Activated T-helper 2 cell treated with anti-CD3 and anti-CD28 coated beads, Interferon-gamma antibody, Interleukin-2, Interleukin-4, amounts not matched to agents 10 μg/mL and 5 μg/mL and 100 μg/mL, durations not matched to agents 14 hours and 24 hours and 36 hours (primary cell): ENCODE measurements at regions of chr1 and their contacts with region 1.

Region 1: GRCh38 chr1:222589462-222590302 is at the start of gene TAF1A:
- DNase-seq: peak; percentile 79
- H3K4me3 Mint-ChIP-seq: peak within 1 kb of the TSS; percentile 96
- H3K27ac Mint-ChIP-seq: peak within 1 kb of the TSS; percentile 93
- H3K4me1 Mint-ChIP-seq: peaks cover 27% of the 10 kb centered on the region
- H3K27me3 Mint-ChIP-seq: no peaks in the 10 kb centered on the region
- total RNA-seq, gene TAF1A: 17.6 and 17.9 TPM in 2 replicates

Region 2: DNA sequence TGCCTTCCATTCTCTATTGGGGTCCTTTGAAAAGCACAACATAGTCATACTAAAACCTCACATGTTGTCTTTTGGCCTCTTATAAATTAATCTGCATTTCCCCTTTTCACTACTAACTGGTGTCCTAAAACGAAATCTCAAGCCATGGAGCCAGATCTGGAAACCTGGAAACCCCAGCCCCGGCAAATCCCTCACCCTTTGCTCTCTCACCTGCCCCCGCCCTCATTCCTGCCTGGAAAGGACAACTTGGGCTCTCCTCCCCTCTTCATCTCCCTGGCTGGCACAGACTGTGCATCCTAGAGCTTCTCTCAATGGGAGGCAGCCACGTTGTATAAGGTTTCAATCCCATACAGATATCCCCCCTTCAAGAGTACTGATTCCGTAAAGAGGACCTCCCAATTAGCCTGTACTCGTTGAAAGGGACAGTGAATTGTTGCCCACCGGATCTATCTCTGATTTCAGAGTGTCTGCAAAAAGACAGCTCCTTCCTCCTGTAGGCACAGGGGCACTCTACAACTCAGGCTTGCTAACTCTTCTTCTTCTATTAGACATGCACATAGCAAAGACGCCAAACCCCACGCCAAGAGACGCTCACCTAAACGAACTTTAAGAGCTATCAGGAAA is 849.2 kb before region 1 on chr1:
- intact Hi-C with region 1: no loop called
- DNase-seq: no peak
- H3K4me3 Mint-ChIP-seq: no peak overlapping the region
- H3K27ac Mint-ChIP-seq: no peak overlapping the region
- H3K4me1 Mint-ChIP-seq: peaks cover 47% of the 10 kb centered on the region
- H3K27me3 Mint-ChIP-seq: no peaks in the 10 kb centered on the region

Region 3: GRCh38 chr1:222443566-222443965 is 146.1 kb before region 1 on chr1:
- intact Hi-C with region 1: no loop called
- DNase-seq: no peak
- H3K4me3 Mint-ChIP-seq: no peak overlapping the region
- H3K27ac Mint-ChIP-seq: no peak overlapping the region
- H3K4me1 Mint-ChIP-seq: peaks cover 2% of the 10 kb centered on the region
- H3K27me3 Mint-ChIP-seq: peaks cover 11% of the 10 kb centered on the region

Region 4: GRCh38 chr1:222634180-222635013 is 44.7 kb after region 1 on chr1:
- intact Hi-C with region 1: loop called (anchors 5 kb)
- DNase-seq: peak; percentile 53
- H3K4me3 Mint-ChIP-seq: no peak overlapping the region
- H3K27ac Mint-ChIP-seq: no peak overlapping the region
- H3K4me1 Mint-ChIP-seq: peaks cover 10% of the 10 kb centered on the region
- H3K27me3 Mint-ChIP-seq: no peaks in the 10 kb centered on the region

Region 5: DNA sequence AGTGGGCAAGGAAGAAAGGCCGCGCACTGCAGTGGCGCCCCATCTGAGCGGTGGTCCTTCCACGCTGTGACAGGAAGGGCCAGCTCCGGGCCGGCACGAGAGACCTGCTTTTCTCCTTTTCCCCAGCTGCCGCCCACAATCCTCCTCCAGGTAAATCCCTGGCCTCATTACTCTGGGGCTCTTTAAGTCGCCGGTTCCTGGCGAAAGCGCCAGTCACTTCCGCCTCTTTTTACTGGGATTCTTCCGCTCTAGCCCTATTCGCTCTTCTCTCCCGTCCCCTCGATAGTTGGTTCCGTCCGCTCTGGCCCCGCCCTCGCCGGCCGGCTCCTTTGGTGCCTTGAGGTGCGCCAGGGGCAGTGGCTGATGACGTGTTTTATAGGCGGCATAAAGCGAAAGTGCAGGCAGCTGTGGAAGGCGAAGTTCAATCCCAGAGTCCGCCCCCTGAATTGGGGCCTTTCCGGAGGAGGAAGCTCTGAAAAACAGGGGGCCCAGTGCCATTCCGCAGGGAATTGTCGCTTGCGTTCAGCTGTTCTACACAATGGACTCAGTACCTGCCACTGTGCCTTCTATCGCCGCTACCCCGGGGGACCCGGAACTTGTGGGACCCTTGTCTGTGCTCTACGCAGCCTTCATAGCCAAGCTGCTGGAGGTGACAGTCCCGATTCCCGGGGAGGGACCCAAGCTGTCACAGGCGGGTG is 54.4 kb after region 1 on chr1:
- intact Hi-C with region 1: loop called (anchors 1 kb)
- DNase-seq: peak; percentile 97
- H3K4me3 Mint-ChIP-seq: peak overlapping the region; percentile 99
- H3K27ac Mint-ChIP-seq: peak overlapping the region; percentile 94
- H3K4me1 Mint-ChIP-seq: peaks cover 18% of the 10 kb centered on the region
- H3K27me3 Mint-ChIP-seq: no peaks in the 10 kb centered on the region